ENCODE measurements at regions of chr7 and their contacts with region 1.

Region 1: GRCh38 chr7:21253740-21254687 is 173.9 kb upstream of the SP4 start:
- H3K4me3 Mint-ChIP-seq: no peak overlapping the region
- H3K27ac Mint-ChIP-seq: no peak overlapping the region
- H3K4me1 Mint-ChIP-seq: no peaks in the 10 kb centered on the region
- H3K27me3 Mint-ChIP-seq: peaks cover 45% of the 10 kb centered on the region

Region 2: GRCh38 chr7:19754521-19755116 is 1499.4 kb before region 1 on chr7:
- intact Hi-C with region 1: loop called (anchors 5 kb)
- H3K4me3 Mint-ChIP-seq: no peak overlapping the region
- H3K27ac Mint-ChIP-seq: no peak overlapping the region
- H3K4me1 Mint-ChIP-seq: no peaks in the 10 kb centered on the region
- H3K27me3 Mint-ChIP-seq: no peaks in the 10 kb centered on the region

Region 3: GRCh38 chr7:20778063-20778721 is 475.8 kb before region 1 on chr7:
- intact Hi-C with region 1: loop called (anchors 2 kb)
- H3K4me3 Mint-ChIP-seq: peak overlapping the region; percentile 61
- H3K27ac Mint-ChIP-seq: no peak overlapping the region
- H3K4me1 Mint-ChIP-seq: peaks cover 7% of the 10 kb centered on the region
- H3K27me3 Mint-ChIP-seq: peaks cover 76% of the 10 kb centered on the region

Region 4: DNA sequence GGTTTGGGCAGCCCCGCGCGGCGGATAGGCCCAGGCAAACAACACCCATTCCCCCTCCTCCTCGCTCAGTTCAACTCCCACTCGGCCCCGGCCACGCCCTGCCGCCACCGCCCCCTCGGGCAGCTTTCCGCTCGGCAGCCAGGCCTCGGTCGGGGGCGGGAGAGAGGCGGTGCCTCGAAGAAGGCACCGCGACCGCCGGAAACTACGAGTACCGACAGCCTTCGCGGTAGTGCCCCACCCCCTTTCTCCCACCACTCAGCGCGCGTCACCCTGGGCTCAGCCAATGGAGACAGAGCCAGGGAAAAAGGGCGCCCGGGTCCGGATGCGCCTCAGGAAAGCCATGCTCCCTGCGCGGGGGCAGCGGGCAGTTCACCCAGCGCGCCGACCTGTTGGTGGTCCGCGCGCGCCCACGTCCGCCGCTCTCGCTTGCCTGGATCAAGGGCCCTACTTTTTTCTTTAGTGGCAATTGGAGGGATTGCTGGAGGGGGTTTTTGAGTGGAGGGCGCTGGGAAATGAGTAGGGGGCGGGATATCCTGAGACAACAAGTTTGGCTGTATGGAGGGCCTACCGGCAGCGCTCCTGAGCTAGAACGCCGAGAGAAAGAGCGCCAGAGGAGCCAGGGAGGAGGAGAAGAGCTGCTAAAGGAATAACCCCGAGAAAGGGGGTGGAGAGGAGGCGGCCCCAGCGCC is 173.3 kb after region 1 on chr7:
- intact Hi-C with region 1: loop called (anchors 5 kb)
- H3K4me3 Mint-ChIP-seq: peak overlapping the region; percentile 100
- H3K27ac Mint-ChIP-seq: peak overlapping the region; percentile 100
- H3K4me1 Mint-ChIP-seq: peaks cover 30% of the 10 kb centered on the region
- H3K27me3 Mint-ChIP-seq: no peaks in the 10 kb centered on the region

Region 5: GRCh38 chr7:21507626-21508343 is 253.8 kb after region 1 on chr7:
- intact Hi-C with region 1: loop called (anchors 1 kb)
- H3K4me3 Mint-ChIP-seq: no peak overlapping the region
- H3K27ac Mint-ChIP-seq: no peak overlapping the region
- H3K4me1 Mint-ChIP-seq: no peaks in the 10 kb centered on the region
- H3K27me3 Mint-ChIP-seq: no peaks in the 10 kb centered on the region

Region 6: GRCh38 chr7:22001345-22002004 is 747.5 kb after region 1 on chr7:
- intact Hi-C with region 1: loop called (anchors 2 kb)
- H3K4me3 Mint-ChIP-seq: no peak overlapping the region
- H3K27ac Mint-ChIP-seq: no peak overlapping the region
- H3K4me1 Mint-ChIP-seq: no peaks in the 10 kb centered on the region
- H3K27me3 Mint-ChIP-seq: no peaks in the 10 kb centered on the region